Head of caudate nucleus (tissue), 42 donors: ENCODE measurements at regions of chr16 and their contacts with region 1.

Region 1: DNA sequence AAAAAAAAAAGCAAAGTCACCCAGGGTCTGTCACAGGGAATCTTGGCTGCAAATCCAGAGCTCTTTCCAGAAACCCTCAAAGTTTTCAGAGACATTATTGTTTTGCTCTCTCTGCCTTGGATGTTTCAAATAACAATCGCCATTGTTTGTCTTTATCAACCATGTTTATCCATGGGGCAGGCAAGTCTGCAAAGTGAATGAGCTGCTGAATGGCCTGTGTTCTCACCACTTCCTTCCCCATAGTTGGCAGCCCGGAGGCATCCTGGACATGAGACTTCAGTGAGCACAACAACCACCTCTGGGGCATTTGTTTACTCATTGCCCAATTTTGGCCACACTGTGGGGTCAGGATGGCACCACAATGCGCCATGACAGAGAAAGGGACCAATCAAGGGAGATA is 53.1 kb upstream of the USP7 start:
- DNase-seq: peak in 33 of 42 donors; percentile 6 to 71 (median 39)

Region 2: GRCh38 chr16:8621572-8622314 is 395.1 kb before region 1 on chr16 and contains the start of gene METTL22:
- intact Hi-C with region 1: no loop called
- DNase-seq: peak; percentile 68 to 96 (median 91)

Region 3: GRCh38 chr16:8660841-8661301 is 356.0 kb before region 1 on chr16:
- intact Hi-C with region 1: loop called (anchors 5 kb)
- DNase-seq: peak; percentile 54 to 90 (median 74)